Heart right ventricle (tissue), 16 donors: ENCODE measurements at regions of chr18 and their contacts with region 1.

Region 1: DNA sequence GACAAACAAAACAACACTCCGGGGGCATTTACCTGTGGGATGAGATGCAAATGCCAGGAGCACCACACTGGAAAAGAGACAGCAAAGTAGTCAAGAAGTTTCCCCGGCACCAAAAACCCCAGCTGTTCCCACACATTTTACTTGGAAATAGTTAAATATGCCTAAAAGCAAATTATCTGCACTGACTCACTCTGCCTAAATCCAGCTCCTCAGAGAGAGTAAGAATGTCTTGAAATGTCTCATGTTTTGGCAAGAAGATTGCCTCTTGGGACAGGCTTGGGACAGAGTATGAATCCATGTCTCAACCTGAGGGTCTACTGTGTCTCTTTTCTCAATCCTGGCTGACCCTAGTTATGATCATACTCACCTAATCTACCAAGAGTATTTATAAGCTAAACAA is 87.5 kb upstream of the RIOK3 start:
- DNase-seq: peak in 1 of 2 donors; percentile 23
- ATAC-seq: peak in 7 of 8 donors; percentile 71 to 94 (median 76)
- H3K4me3 ChIP-seq: no peak overlapping the region
- H3K27ac ChIP-seq: peak overlapping the region in 8 of 10 donors; percentile 23 to 72 (median 38)
- H3K4me1 ChIP-seq: peaks cover 0 to 22% (median 8%) of the 10 kb centered on the region in 9 donors
- H3K27me3 ChIP-seq: no peaks in the 10 kb centered on the region
- CTCF ChIP-seq: no peak

Region 2: DNA sequence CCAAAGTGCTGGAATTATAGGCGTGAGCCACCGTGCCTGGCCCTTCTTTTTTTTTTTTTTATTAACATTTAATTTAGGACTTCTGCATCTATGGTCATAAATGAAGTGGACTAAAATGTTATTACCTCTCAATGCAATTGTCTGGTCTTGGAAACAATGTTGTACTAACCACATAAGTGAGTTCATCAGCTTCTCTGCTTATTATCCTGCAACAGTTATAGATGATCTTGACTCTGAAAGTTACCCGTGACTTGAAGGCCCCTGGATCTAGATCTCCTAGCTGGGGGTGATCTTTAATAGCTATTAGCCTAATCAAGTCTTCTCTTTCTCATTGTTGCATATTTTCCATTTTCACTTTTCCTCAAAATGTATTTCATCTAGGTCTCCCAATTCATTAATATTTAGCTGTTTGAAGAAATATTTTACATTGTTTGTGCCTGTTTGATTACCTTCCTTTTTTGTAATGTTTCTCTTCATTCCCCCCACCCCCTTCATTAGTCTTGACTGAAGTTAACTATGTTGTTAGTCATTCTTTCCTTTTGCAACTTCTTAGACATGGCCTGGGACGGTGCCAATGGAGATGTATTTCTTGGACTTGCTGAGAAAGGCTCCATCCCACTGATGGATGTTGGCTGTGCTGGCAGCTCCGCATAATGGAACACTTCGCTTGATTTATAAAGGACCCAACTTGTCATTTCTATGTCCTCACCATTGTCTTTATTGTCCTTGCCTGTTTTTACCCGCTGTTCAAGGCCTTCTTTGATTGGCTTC is 54.1 kb before region 1 on chr18:
- intact Hi-C with region 1: loop called in 1 of 10 experiments (anchors 10 kb)
- DNase-seq: peak; percentile 30 to 59
- ATAC-seq: peak in 5 of 8 donors; percentile 22 to 57 (median 38)
- H3K4me3 ChIP-seq: no peak overlapping the region
- H3K27ac ChIP-seq: peak overlapping the region in 3 of 10 donors; percentile 15 to 30 (median 15)
- H3K4me1 ChIP-seq: peaks cover 0 to 21% (median 7%) of the 10 kb centered on the region in 9 donors
- H3K27me3 ChIP-seq: no peaks in the 10 kb centered on the region
- CTCF ChIP-seq: no peak